Adrenal gland (tissue), 19 donors: ENCODE measurements at regions of chr17 and their contacts with region 1.

Region 1: DNA sequence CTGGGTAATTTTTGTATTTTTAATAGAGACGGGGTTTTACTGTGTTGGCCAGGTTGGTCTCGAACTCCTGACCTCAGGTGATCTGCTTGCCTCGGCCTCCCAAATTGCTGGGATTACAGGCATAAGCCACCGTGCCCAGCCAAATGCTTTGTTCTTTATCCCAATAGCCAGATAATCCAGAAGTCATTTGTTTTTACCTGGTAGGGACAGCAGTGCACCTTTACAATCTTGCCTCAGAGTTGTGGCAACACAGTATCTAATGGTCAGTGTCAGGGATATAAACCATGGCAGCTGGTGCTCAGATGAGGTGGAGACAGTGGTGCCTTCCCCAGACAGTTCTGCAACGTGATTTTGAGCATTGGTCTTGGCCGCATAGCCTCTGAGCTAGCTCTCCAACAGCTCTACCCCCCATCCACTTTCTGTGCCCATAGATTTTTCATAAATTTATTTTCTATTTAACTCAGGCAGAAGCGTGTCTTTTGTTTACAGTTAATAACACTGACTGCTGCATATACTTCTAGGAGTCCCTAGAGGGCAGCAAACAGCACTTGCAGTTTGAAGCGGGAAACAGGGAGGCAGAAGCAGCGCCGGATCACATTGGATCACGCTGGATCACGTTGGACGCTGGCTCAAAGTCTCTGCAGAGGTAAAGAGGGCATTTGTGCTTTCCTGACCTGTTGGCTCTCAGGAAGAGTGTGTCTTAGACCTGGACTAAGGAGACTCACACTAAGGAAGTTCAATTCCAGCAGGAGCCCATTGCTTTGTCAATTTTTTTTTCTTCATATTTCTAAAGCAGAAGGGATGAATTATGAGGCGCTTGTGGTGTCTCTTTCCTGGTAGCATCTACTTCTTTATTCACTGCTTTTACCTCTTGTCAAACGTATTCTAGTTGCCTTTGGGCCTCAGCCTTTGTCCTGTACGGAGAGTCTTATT is 5.1 kb upstream of the GGT6 start:
- DNase-seq: peak in 6 of 7 donors; percentile 68 to 87 (median 80)
- H3K4me3 ChIP-seq: no peak overlapping the region
- H3K27ac ChIP-seq: no peak overlapping the region
- H3K4me1 ChIP-seq: peaks cover 0 to 15% of the 10 kb centered on the region in 2 donors
- H3K27me3 ChIP-seq: no peaks in the 10 kb centered on the region
- CTCF ChIP-seq: peak; percentile 65 to 81 (median 74)
- POLR2A ChIP-seq: no peak

Region 2: DNA sequence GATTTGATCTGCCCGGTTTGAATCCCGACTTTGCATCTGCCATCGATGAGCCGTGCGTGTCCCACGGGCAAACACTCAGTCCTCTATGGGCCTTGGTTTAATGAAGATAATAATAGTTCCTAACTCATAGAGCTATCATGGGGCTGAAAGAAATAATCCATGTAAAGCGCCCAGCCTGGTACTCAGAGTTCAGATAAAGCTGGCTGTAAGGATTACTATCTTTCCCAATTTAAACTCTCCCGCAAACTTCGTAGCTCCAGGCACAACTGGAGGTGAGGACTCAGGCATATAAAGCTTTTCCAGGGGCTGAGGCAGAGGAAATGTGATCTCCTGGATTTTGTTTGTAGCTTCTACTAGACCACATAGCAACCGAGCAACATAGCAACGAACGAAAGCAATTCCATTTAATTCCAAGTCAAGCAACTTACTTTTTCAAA is 59.7 kb after region 1 on chr17:
- intact Hi-C with region 1: loop called (anchors 2 to 5 kb)
- DNase-seq: no peak
- H3K4me3 ChIP-seq: no peak overlapping the region
- H3K27ac ChIP-seq: no peak overlapping the region
- H3K4me1 ChIP-seq: no peaks in the 10 kb centered on the region
- H3K27me3 ChIP-seq: peaks cover 3% of the 10 kb centered on the region
- CTCF ChIP-seq: no peak
- POLR2A ChIP-seq: no peak

Region 3: GRCh38 chr17:5237541-5238016 is 672.1 kb after region 1 on chr17:
- intact Hi-C with region 1: no loop called
- DNase-seq: peak; percentile 43 to 83 (median 64)
- H3K4me3 ChIP-seq: no peak overlapping the region
- H3K27ac ChIP-seq: no peak overlapping the region
- H3K4me1 ChIP-seq: no peaks in the 10 kb centered on the region
- H3K27me3 ChIP-seq: no peaks in the 10 kb centered on the region
- CTCF ChIP-seq: peak; percentile 43 to 73 (median 66)
- POLR2A ChIP-seq: no peak